ENCODE measurements at regions of chr6 and their contacts with region 1.

Region 1: GRCh38 chr6:79233611-79234149 is 802 bp downstream of the HMGN3 start:
- DNase-seq: peak; percentile 73
- H3K4me3 Mint-ChIP-seq: peak overlapping the region; percentile 95
- H3K27ac Mint-ChIP-seq: peak overlapping the region; percentile 78
- H3K4me1 Mint-ChIP-seq: peaks cover 14% of the 10 kb centered on the region
- H3K27me3 Mint-ChIP-seq: no peaks in the 10 kb centered on the region

Region 2: DNA sequence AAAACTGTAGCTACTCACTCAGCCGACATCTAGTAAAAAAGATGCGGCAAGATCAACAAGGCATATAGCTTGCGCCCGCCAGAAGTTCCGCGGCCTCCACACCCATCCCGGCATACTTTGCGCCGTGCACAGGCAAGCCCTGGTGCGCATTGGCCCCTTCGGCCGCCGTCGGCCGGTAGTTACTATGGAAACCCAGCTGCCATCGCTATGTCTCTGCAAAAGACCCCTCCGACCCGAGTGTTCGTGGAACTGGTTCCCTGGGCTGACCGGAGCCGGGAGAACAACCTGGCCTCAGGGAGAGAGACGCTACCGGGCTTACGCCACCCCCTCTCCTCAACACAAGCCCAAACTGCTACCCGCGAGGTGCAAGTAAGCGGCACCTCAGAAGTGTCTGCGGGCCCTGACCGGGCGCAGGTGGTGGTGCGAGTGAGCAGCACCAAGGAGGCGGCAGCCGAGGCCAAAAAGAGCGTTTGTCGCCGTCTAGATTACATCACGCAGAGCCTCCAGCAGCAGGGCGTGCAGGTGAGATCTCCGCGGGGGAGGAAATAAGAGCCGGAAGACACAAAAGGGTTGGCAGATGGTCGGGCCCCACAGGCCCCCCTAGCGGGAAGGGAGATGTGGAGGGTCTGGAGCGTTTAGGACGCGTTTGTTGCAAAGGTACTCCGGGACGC is 366.2 kb before region 1 on chr6 and contains the start of gene IRAK1BP1:
- CTCF ChIA-PET with region 1: no interaction called
- intact Hi-C with region 1: loop called (anchors 1 kb)
- DNase-seq: peak; percentile 90
- H3K4me3 Mint-ChIP-seq: peak within 1 kb of the TSS; percentile 98
- H3K27ac Mint-ChIP-seq: peak within 1 kb of the TSS; percentile 85
- H3K4me1 Mint-ChIP-seq: peaks cover 19% of the 10 kb centered on the region
- H3K27me3 Mint-ChIP-seq: no peaks in the 10 kb centered on the region
- total RNA-seq, gene IRAK1BP1: 2.2 to 2.4 TPM

Region 3: GRCh38 chr6:79536954-79537747 is 303.5 kb after region 1 on chr6 and contains the start of gene LCA5:
- CTCF ChIA-PET with region 1: no interaction called
- intact Hi-C with region 1: loop called (anchors 1 kb)
- DNase-seq: peak; percentile 90
- H3K4me3 Mint-ChIP-seq: no peak within 1 kb of the TSS
- H3K27ac Mint-ChIP-seq: no peak within 1 kb of the TSS
- H3K4me1 Mint-ChIP-seq: no peaks in the 10 kb centered on the region
- H3K27me3 Mint-ChIP-seq: peaks cover 8% of the 10 kb centered on the region
- total RNA-seq, gene LCA5: 0.22 to 0.29 TPM

Region 4: DNA sequence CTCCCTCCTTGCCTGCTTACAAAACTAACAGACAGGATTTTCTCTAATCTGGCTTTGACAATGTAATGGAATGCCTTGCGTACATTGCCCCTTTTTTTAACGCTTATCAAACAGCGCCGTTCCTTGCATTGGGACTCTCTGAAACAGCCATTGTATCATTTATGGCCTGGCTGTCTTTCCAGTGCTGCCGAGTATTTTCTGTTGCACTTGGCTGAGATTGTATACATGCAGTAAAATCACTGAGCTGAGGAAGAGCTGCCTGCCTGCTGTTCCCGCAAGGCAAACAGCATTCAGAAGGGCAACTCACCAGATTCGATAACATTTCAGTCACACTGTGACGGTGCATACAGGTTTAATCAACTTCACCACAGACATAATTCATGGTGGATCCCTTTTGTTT is 503.5 kb after region 1 on chr6:
- CTCF ChIA-PET with region 1: no interaction called
- intact Hi-C with region 1: no loop called
- DNase-seq: no peak
- H3K4me3 Mint-ChIP-seq: no peak overlapping the region
- H3K27ac Mint-ChIP-seq: no peak overlapping the region
- H3K4me1 Mint-ChIP-seq: no peaks in the 10 kb centered on the region
- H3K27me3 Mint-ChIP-seq: peaks cover 5% of the 10 kb centered on the region

Region 5: GRCh38 chr6:80004173-80005072 is 770.7 kb after region 1 on chr6 and contains the start of gene TTK:
- CTCF ChIA-PET with region 1: no interaction called
- intact Hi-C with region 1: loop called (anchors 5 kb)
- DNase-seq: peak; percentile 93
- H3K4me3 Mint-ChIP-seq: peak within 1 kb of the TSS; percentile 95
- H3K27ac Mint-ChIP-seq: peak within 1 kb of the TSS; percentile 89
- H3K4me1 Mint-ChIP-seq: peaks cover 16% of the 10 kb centered on the region
- H3K27me3 Mint-ChIP-seq: peaks cover 1% of the 10 kb centered on the region
- total RNA-seq, gene TTK: 45.9 to 51.1 TPM

Measured in activated naive CD4-positive, alpha-beta T cell treated with anti-CD3 and anti-CD28 coated beads for 36 hours (primary cell).